ENCODE measurements at regions of chr4 and their contacts with region 1.

Region 1: GRCh38 chr4:148344941-148345340 is 97.3 kb downstream of the NR3C2 start:
- DNase-seq: no peak
- ATAC-seq: no peak
- H3K4me3 ChIP-seq: no peak overlapping the region
- H3K4me3 Mint-ChIP-seq: no peak overlapping the region
- H3K27ac ChIP-seq: no peak overlapping the region
- H3K27ac Mint-ChIP-seq: no peak overlapping the region
- H3K4me1 ChIP-seq: peaks cover 9% of the 10 kb centered on the region
- H3K4me1 Mint-ChIP-seq: peaks cover 55% of the 10 kb centered on the region
- H3K27me3 ChIP-seq: no peaks in the 10 kb centered on the region
- H3K27me3 Mint-ChIP-seq: no peaks in the 10 kb centered on the region
- CTCF ChIP-seq: no peak

Region 2: GRCh38 chr4:148311526-148311925 is 33.4 kb before region 1 on chr4:
- CTCF ChIA-PET with region 1: no interaction called
- POLR2A ChIA-PET with region 1: no interaction called
- intact Hi-C with region 1: loop called in 1 of 2 experiments (anchors 5 kb)
- DNase-seq: no peak
- ATAC-seq: no peak
- H3K4me3 ChIP-seq: no peak overlapping the region
- H3K4me3 Mint-ChIP-seq: no peak overlapping the region
- H3K27ac ChIP-seq: no peak overlapping the region
- H3K27ac Mint-ChIP-seq: no peak overlapping the region
- H3K4me1 ChIP-seq: no peaks in the 10 kb centered on the region
- H3K4me1 Mint-ChIP-seq: peaks cover 31% of the 10 kb centered on the region
- H3K27me3 ChIP-seq: no peaks in the 10 kb centered on the region
- H3K27me3 Mint-ChIP-seq: no peaks in the 10 kb centered on the region
- CTCF ChIP-seq: no peak